Colonic mucosa (tissue), 4 donors: ENCODE measurements at regions of chr11 and their contacts with region 1.

Region 1: DNA sequence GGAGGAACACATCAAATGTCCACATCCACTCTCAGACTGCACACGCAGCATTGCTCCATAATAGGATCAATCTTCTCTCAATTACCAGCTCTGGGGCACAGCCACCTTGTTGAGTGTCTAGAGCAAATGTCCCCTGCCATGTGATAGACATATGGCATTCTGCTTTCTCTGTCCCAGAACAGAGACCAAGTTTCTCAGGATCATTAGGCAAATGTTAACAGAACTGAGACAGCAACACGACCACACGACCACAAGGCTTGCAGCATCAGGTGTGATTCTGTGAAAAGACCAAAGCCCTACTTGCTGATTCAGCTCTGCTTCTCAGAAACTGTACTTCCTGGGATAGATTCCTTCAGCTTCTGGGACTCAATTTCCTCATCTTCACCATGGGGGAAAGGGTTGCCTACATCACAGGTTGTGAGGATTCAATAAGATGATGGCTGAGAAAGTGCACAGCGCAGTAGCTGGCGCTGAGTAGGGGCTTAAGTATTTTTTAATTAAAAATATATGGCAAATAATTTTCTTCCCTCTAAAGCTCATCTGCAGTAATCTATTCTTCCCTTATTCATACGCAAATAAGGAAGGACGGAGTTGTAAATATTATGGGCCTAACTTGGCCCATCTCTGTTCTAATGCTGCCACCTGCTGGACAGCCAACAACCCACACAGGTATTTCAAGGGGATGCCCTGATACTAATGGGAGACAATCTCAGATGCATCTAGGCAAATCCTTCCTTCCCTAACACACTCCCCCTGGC is 54.3 kb upstream of the USP47 start:
- DNase-seq: peak; percentile 81
- H3K4me3 ChIP-seq: no peak overlapping the region
- H3K27ac ChIP-seq: no peak overlapping the region
- H3K4me1 ChIP-seq: no peaks in the 10 kb centered on the region
- H3K27me3 ChIP-seq: no peaks in the 10 kb centered on the region
- CTCF ChIP-seq: peak; percentile 89

Region 2: GRCh38 chr11:11028017-11028692 is 759.3 kb before region 1 on chr11:
- intact Hi-C with region 1: loop called (anchors 2 kb)
- DNase-seq: peak; percentile 80
- H3K4me3 ChIP-seq: no peak overlapping the region
- H3K27ac ChIP-seq: no peak overlapping the region
- H3K4me1 ChIP-seq: no peaks in the 10 kb centered on the region
- H3K27me3 ChIP-seq: no peaks in the 10 kb centered on the region
- CTCF ChIP-seq: peak; percentile 78

Region 3: DNA sequence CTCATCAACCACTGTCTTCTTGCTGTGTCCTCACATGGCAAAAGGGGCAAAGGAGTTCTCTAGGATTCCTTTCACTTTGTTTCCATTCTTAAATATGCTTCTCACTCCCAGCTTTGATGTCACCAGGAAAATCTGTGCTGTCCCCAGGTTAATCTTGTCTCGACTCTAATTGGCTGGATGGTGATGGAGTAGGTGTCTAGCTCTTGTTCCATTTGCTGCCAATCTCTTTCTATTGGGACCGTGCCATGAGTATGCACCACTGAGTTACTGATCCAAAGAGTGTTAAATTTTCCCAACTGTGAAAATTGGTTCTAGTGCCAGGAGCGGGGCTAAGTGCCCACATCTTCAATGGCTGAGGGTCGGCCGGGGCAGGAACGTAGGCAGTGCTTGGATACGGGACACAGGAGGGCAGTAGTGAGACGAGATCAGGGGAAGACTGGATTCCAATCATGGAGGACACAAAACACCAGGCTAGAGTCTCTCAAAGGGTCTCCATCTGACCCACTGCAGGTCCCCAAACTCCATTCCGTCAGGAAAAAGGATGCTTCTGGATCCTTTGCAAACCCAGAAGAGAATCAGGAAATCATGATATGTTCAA is 386.8 kb before region 1 on chr11:
- intact Hi-C with region 1: loop called (anchors 10 kb)
- DNase-seq: no peak
- H3K4me3 ChIP-seq: no peak overlapping the region
- H3K27ac ChIP-seq: no peak overlapping the region
- H3K4me1 ChIP-seq: no peaks in the 10 kb centered on the region
- H3K27me3 ChIP-seq: no peaks in the 10 kb centered on the region
- CTCF ChIP-seq: no peak

Region 4: GRCh38 chr11:11960687-11961086 is 173.2 kb after region 1 on chr11:
- intact Hi-C with region 1: no loop called
- DNase-seq: no peak
- H3K4me3 ChIP-seq: no peak overlapping the region
- H3K27ac ChIP-seq: no peak overlapping the region
- H3K4me1 ChIP-seq: no peaks in the 10 kb centered on the region
- H3K27me3 ChIP-seq: no peaks in the 10 kb centered on the region
- CTCF ChIP-seq: no peak